AG04450 (cell line): ENCODE measurements at regions of chr14 and their contacts with region 1.

Region 1: DNA sequence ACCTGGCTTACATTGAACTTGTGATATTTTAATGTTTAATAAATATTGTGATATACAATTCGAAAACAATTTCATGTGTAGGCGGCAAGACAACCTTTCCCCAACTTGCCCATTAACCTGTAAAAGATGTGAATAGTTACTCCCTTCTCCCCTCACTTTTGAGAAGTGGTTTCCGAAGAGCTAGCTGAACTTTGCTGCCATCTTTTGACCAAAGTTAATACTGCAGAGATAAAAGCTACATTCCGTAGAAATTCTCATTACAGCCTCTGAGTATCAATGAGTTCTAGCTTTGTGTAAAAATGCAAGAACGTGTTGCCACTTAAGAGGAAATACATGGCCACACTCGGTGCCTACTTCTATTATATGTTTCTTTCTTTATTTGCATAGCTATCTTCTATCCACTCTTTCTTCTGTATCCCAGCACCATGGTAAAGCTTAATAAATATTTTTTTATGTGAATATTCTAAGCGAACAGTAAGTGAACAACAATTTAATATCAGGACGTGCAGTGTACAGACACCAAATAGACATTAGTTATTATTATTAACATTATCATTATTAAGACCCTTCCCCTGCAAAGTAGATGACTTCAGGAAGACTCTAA is 105.1 kb upstream of the TMEM260 start:
- DNase-seq: no peak
- H3K4me3 ChIP-seq: no peak overlapping the region
- H3K27ac ChIP-seq: no peak overlapping the region
- H3K27me3 ChIP-seq: peaks cover 8% of the 10 kb centered on the region
- CTCF ChIP-seq: peak; percentile 93

Region 2: GRCh38 chr14:55665067-55665675 is 809.4 kb before region 1 on chr14:
- CTCF ChIA-PET with region 1: interaction called, 15 read pairs
- POLR2A ChIA-PET with region 1: no interaction called
- DNase-seq: no peak
- H3K4me3 ChIP-seq: no peak overlapping the region
- H3K27ac ChIP-seq: no peak overlapping the region
- H3K27me3 ChIP-seq: no peaks in the 10 kb centered on the region
- CTCF ChIP-seq: no peak

Region 3: DNA sequence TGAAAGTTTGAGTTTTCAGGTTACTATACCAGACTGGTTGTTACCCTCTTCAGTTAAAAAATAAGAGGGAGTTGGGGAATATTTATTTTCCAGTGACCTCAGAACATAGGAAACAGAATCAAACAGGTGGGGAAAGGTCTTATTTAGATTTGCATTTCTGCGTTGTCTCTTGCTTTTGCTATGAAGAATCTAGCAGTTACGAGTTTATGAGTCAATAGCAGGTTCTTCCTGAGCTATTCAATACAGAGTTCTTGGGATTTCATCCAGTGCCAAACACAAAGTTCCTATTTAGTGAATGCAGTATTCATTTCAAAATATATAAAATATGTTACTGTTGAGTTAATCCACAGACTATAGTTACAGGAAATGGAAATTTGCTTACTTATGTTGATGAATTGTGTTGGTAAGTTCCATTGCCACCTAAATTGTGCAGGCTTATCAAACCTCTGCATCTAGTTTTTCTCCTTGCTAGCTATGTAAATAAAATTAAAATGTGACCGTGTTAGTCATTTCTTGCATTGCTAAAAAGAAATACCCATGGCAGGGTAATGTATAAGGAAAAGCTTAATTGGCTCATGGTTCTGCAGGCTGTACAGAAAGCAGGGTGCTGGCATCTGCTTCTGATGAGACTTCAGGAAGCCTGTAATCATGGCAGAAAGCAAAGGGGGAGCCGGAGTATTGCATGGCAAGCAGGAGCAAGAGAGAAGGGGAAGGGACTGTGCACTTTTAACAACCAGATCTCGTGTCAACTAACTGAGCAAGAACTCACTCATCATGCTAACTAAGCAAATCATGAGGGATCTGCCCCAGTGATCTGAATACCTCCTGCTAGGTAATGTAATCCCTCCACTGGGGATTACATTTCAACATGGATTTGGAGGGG is 784.3 kb before region 1 on chr14:
- CTCF ChIA-PET with region 1: interaction called, 14 read pairs
- POLR2A ChIA-PET with region 1: no interaction called
- DNase-seq: no peak
- H3K4me3 ChIP-seq: no peak overlapping the region
- H3K27ac ChIP-seq: no peak overlapping the region
- H3K27me3 ChIP-seq: no peaks in the 10 kb centered on the region
- CTCF ChIP-seq: no peak

Region 4: GRCh38 chr14:55715889-55716288 is 758.6 kb before region 1 on chr14:
- CTCF ChIA-PET with region 1: interaction called, 16 read pairs
- POLR2A ChIA-PET with region 1: no interaction called
- DNase-seq: no peak
- H3K4me3 ChIP-seq: no peak overlapping the region
- H3K27ac ChIP-seq: no peak overlapping the region
- H3K27me3 ChIP-seq: no peaks in the 10 kb centered on the region
- CTCF ChIP-seq: no peak

Region 5: GRCh38 chr14:55843718-55844403 is 630.7 kb before region 1 on chr14:
- CTCF ChIA-PET with region 1: interaction called, 11 read pairs
- POLR2A ChIA-PET with region 1: no interaction called
- DNase-seq: no peak
- H3K4me3 ChIP-seq: no peak overlapping the region
- H3K27ac ChIP-seq: no peak overlapping the region
- H3K27me3 ChIP-seq: no peaks in the 10 kb centered on the region
- CTCF ChIP-seq: peak; percentile 31

Region 6: GRCh38 chr14:56461276-56462275 is 12.9 kb before region 1 on chr14:
- CTCF ChIA-PET with region 1: interaction called, 12 read pairs
- POLR2A ChIA-PET with region 1: no interaction called
- DNase-seq: no peak
- H3K4me3 ChIP-seq: no peak overlapping the region
- H3K27ac ChIP-seq: no peak overlapping the region
- H3K27me3 ChIP-seq: no peaks in the 10 kb centered on the region
- CTCF ChIP-seq: no peak